ENCODE measurements at regions of chr5 and their contacts with region 1.

Region 1: DNA sequence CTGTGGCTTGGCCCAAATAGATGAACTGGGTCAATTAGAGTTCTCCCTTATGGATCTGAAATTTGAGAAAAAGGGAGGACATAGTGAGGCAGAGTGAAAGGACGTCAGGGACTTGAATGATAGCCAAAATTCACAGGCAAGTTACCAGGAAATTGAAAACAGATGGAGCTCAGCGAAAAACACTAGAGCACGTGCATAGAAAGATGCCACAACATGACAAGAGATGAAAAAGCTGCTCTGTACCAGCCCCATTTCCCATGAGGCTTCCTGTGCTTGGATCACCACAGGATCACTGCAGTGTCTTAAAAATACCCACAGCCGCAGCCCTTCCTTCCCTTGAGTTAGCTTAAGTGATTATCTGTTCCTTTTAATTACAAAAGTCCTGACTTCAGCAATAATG is 39.0 kb upstream of the HOMER1 start:
- DNase-seq: no peak
- ATAC-seq: peak in 1 of 4 donors; percentile 32
- H3K4me3 ChIP-seq: no peak overlapping the region
- H3K27ac ChIP-seq: no peak overlapping the region
- H3K4me1 ChIP-seq: peaks cover 0 to 9% (median 0%) of the 10 kb centered on the region in 12 donors
- H3K27me3 ChIP-seq: no peaks in the 10 kb centered on the region
- CTCF ChIP-seq: no peak
- POLR2A ChIP-seq: no peak

Region 2: DNA sequence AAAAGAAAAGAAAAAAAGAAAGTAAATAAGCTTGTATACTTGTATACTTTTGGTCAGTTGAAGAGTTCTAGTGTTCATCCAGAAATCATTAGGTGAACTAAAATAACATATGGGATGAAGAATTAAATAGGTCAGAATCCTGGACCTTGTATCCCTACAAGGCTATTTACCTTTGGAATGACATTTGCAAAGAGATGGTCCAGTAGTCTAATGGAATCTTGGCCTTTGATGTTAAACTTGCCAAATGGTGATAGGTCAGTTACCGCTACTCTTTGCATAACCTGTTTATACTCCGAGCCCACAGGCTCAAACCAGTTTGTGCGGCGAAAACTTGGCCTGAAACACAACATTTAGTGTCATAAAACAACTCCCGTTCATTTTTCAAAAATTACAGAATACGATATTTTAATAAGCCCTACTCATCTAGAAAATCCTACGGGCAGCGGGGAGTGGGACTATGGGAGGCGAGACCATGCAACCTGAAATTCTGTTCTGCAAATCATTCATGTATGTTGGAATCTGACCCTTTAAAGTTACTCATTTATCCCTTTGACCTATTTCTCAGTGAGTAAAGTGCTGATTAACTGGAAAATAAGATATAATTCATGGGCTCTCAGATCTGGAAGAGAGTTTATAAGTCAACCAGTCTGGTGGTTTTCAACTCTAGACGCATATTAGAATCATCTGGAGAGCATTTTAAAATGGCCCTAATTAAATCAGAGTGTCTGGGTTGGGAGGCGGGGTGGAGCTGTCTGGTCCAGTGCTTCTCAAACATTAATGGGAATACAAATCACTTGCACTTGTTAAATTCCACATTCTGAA is 522.1 kb before region 1 on chr5:
- intact Hi-C with region 1: no loop called
- DNase-seq: no peak
- ATAC-seq: no peak
- H3K4me3 ChIP-seq: no peak overlapping the region
- H3K27ac ChIP-seq: no peak overlapping the region
- H3K4me1 ChIP-seq: no peaks in the 10 kb centered on the region
- H3K27me3 ChIP-seq: no peaks in the 10 kb centered on the region
- CTCF ChIP-seq: no peak
- POLR2A ChIP-seq: no peak

Region 3: GRCh38 chr5:79436224-79436623 is 116.8 kb before region 1 on chr5:
- intact Hi-C with region 1: no loop called
- DNase-seq: no peak
- ATAC-seq: peak in 1 of 4 donors; percentile 58
- H3K4me3 ChIP-seq: no peak overlapping the region
- H3K27ac ChIP-seq: no peak overlapping the region
- H3K4me1 ChIP-seq: no peaks in the 10 kb centered on the region
- H3K27me3 ChIP-seq: no peaks in the 10 kb centered on the region
- CTCF ChIP-seq: no peak
- POLR2A ChIP-seq: no peak

Region 4: GRCh38 chr5:79642212-79642611 is 89.2 kb after region 1 on chr5:
- intact Hi-C with region 1: no loop called
- DNase-seq: no peak
- ATAC-seq: peak in 1 of 4 donors; percentile 47
- H3K4me3 ChIP-seq: no peak overlapping the region
- H3K27ac ChIP-seq: no peak overlapping the region
- H3K4me1 ChIP-seq: peaks cover 0 to 21% (median 0%) of the 10 kb centered on the region in 12 donors
- H3K27me3 ChIP-seq: no peaks in the 10 kb centered on the region
- CTCF ChIP-seq: no peak
- POLR2A ChIP-seq: no peak

Region 5: DNA sequence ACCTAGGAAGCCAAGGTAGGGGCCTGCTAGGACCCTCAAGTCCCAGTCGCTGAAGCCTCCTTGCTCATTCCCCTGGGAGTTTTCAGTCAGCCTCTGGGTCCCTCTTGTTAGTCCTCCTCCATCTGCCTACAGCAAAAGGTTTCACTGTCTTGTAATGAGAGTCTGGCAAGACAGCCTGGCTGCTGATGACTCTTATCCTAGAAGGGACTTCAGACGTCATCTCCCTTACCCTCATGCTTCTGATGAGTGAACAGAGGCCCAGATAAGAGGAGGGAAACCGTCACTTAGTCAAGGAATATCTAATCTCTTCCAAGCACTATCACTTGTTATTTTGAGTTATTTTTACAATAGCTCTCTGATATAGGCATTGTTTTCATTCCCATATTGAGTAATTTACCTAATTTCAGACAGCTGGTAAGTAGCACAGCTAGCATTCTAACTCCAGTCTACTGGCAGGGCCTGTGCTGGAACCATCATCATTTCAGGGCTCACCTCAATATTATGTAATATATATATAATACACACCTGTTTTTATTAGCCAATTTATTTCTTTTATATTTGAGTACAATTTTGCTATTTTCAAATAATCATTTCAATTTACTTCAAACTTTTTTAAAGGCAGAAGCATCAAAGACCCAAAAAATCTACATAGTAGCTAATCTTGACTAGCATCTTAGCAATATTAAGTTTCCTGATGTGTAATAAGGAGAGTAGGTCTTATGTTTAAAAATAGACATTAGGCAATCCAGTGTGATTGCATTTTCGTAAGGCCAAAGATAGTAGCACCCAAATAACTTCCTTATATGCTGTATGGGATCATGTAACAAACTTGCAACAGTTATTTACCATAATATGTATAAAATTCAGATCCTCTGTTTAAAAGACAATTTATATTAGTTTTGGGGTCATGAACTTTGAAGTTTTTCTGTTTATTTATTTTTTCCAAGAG is 144.5 kb after region 1 on chr5:
- intact Hi-C with region 1: no loop called
- DNase-seq: peak in 4 of 5 donors; percentile 43 to 72 (median 62)
- ATAC-seq: peak; percentile 80 to 91 (median 84)
- H3K4me3 ChIP-seq: peak overlapping the region in 2 of 12 donors; percentile 0 to 13
- H3K27ac ChIP-seq: peak overlapping the region; percentile 57 to 99 (median 94)
- H3K4me1 ChIP-seq: peaks cover 0 to 46% (median 19%) of the 10 kb centered on the region in 12 donors
- H3K27me3 ChIP-seq: no peaks in the 10 kb centered on the region
- CTCF ChIP-seq: no peak
- POLR2A ChIP-seq: peak in 1 of 2 donors; percentile 76

Region 6: GRCh38 chr5:79865579-79865978 is 312.6 kb after region 1 on chr5:
- intact Hi-C with region 1: loop called in 1 of 10 experiments (anchors 5 kb)
- DNase-seq: no peak
- ATAC-seq: peak; percentile 29 to 80 (median 44)
- H3K4me3 ChIP-seq: no peak overlapping the region
- H3K27ac ChIP-seq: peak overlapping the region in 3 of 12 donors; percentile 3 to 28 (median 28)
- H3K4me1 ChIP-seq: peaks cover 0 to 5% (median 0%) of the 10 kb centered on the region in 12 donors
- H3K27me3 ChIP-seq: no peaks in the 10 kb centered on the region
- CTCF ChIP-seq: no peak
- POLR2A ChIP-seq: no peak